Naive thymus-derived CD4-positive, alpha-beta T cell (primary cell): ENCODE measurements at regions of chr12 and their contacts with region 1.

Region 1: GRCh38 chr12:107317751-107318613 is 224.6 kb upstream of the CRY1 start:
- DNase-seq: peak; percentile 67 to 89 (median 85)
- ATAC-seq: peak; percentile 78
- H3K4me3 ChIP-seq: peak overlapping the region; percentile 66
- H3K4me3 Mint-ChIP-seq: peak overlapping the region; percentile 84 to 98 (median 88)
- H3K27ac ChIP-seq: peak overlapping the region; percentile 89
- H3K27ac Mint-ChIP-seq: peak overlapping the region; percentile 34 to 89 (median 62)
- H3K4me1 ChIP-seq: peaks cover 12 to 21% of the 10 kb centered on the region in 2 donors
- H3K4me1 Mint-ChIP-seq: peaks cover 11 to 38% (median 28%) of the 10 kb centered on the region in 7 donors
- H3K27me3 ChIP-seq: no peaks in the 10 kb centered on the region
- H3K27me3 Mint-ChIP-seq: peaks cover 0 to 39% (median 0%) of the 10 kb centered on the region in 5 donors

Region 2: GRCh38 chr12:106357549-106358395 is 960.2 kb before region 1 on chr12 and contains the start of gene POLR3B:
- CTCF ChIA-PET with region 1: no interaction called
- POLR2A ChIA-PET with region 1: no interaction called
- intact Hi-C with region 1: loop called in 1 of 2 experiments (anchors 1 kb)
- DNase-seq: peak; percentile 95 to 99 (median 98)
- ATAC-seq: peak; percentile 98
- H3K4me3 ChIP-seq: peak within 1 kb of the TSS; percentile 96
- H3K4me3 Mint-ChIP-seq: peak within 1 kb of the TSS; percentile 81 to 97 (median 92)
- H3K27ac ChIP-seq: peak within 1 kb of the TSS; percentile 74
- H3K27ac Mint-ChIP-seq: peak within 1 kb of the TSS; percentile 85 to 95 (median 91)
- H3K4me1 ChIP-seq: peaks cover 6 to 12% of the 10 kb centered on the region in 2 donors
- H3K4me1 Mint-ChIP-seq: peaks cover 11 to 22% (median 17%) of the 10 kb centered on the region in 7 donors
- H3K27me3 ChIP-seq: no peaks in the 10 kb centered on the region
- H3K27me3 Mint-ChIP-seq: no peaks in the 10 kb centered on the region
- total RNA-seq, gene POLR3B: 4.7 to 8.7 (median 6.8) TPM

Region 3: GRCh38 chr12:107131832-107132616 is 186.0 kb before region 1 on chr12:
- CTCF ChIA-PET with region 1: interaction called, 3 read pairs
- POLR2A ChIA-PET with region 1: no interaction called
- intact Hi-C with region 1: loop called (anchors 5 kb)
- DNase-seq: peak in 6 of 9 donors; percentile 5 to 56 (median 42)
- ATAC-seq: peak; percentile 59
- H3K4me3 ChIP-seq: no peak overlapping the region
- H3K4me3 Mint-ChIP-seq: no peak overlapping the region
- H3K27ac ChIP-seq: no peak overlapping the region
- H3K27ac Mint-ChIP-seq: peak overlapping the region in 2 of 9 donors; percentile 12 to 46
- H3K4me1 ChIP-seq: no peaks in the 10 kb centered on the region
- H3K4me1 Mint-ChIP-seq: peaks cover 0 to 5% (median 0%) of the 10 kb centered on the region in 7 donors
- H3K27me3 ChIP-seq: no peaks in the 10 kb centered on the region
- H3K27me3 Mint-ChIP-seq: peaks cover 0 to 1% (median 0%) of the 10 kb centered on the region in 5 donors

Region 4: DNA sequence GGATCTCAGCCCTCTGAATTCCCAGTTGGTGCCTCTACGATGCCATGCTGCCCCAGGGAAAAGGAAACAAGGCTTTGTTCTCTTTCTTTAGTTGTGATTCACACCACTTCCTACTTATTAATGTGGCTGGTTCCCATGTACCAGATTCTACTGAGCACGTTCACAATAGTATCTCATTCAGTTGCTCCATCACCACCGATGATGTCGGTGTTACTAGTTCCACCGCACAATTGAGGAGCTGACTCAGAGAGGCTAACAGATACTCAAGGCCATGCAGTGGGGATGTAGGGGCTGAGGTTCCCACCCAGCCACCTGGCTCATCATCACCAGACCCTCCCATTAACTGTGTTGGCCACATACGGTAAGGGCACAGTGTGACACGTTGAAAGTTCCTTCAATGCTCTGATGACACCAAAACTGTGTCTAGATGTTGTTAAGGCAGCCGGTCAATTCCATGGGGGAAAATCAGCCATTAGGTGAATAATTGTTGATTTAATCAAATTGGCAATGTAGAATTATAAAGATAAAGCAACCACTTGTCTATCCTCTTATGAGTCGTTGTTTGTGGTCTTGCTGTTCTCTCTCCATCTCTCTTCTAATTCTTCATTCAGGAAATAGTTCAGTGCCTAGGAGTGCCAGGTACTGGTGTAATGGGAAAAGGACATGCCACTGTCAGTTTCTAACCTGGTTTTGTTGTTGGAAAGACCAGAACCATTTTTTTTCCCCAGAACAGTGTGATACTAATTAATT is 19.5 kb after region 1 on chr12:
- CTCF ChIA-PET with region 1: interaction called, 3 read pairs
- POLR2A ChIA-PET with region 1: interaction called, 12 read pairs
- intact Hi-C with region 1: loop called in 1 of 2 experiments (anchors 2 kb)
- DNase-seq: no peak
- ATAC-seq: peak; percentile 53
- H3K4me3 ChIP-seq: no peak overlapping the region
- H3K4me3 Mint-ChIP-seq: peak overlapping the region in 3 of 10 donors; percentile 10 to 25 (median 17)
- H3K27ac ChIP-seq: no peak overlapping the region
- H3K27ac Mint-ChIP-seq: peak overlapping the region in 5 of 9 donors; percentile 14 to 78 (median 34)
- H3K4me1 ChIP-seq: peaks cover 0 to 21% of the 10 kb centered on the region in 2 donors
- H3K4me1 Mint-ChIP-seq: peaks cover 18 to 74% (median 60%) of the 10 kb centered on the region in 7 donors
- H3K27me3 ChIP-seq: no peaks in the 10 kb centered on the region
- H3K27me3 Mint-ChIP-seq: no peaks in the 10 kb centered on the region

Region 5: GRCh38 chr12:107393043-107393717 is 75.2 kb after region 1 on chr12:
- CTCF ChIA-PET with region 1: interaction called, 3 read pairs
- POLR2A ChIA-PET with region 1: interaction called, 10 read pairs
- intact Hi-C with region 1: no loop called
- DNase-seq: peak in 6 of 9 donors; percentile 32 to 56 (median 49)
- ATAC-seq: peak; percentile 44
- H3K4me3 ChIP-seq: no peak overlapping the region
- H3K4me3 Mint-ChIP-seq: peak overlapping the region; percentile 5 to 67 (median 58)
- H3K27ac ChIP-seq: peak overlapping the region; percentile 5
- H3K27ac Mint-ChIP-seq: peak overlapping the region in 8 of 9 donors; percentile 80 to 94 (median 87)
- H3K4me1 ChIP-seq: peaks cover 0 to 47% of the 10 kb centered on the region in 2 donors
- H3K4me1 Mint-ChIP-seq: peaks cover 39 to 96% (median 91%) of the 10 kb centered on the region in 7 donors
- H3K27me3 ChIP-seq: no peaks in the 10 kb centered on the region
- H3K27me3 Mint-ChIP-seq: no peaks in the 10 kb centered on the region

Region 6: GRCh38 chr12:107607464-107608392 is 289.7 kb after region 1 on chr12:
- CTCF ChIA-PET with region 1: interaction called, 4 read pairs
- POLR2A ChIA-PET with region 1: interaction called, 3 read pairs
- intact Hi-C with region 1: loop called (anchors 1 kb)
- DNase-seq: peak; percentile 55 to 82 (median 71)
- ATAC-seq: peak; percentile 78
- H3K4me3 ChIP-seq: no peak overlapping the region
- H3K4me3 Mint-ChIP-seq: no peak overlapping the region
- H3K27ac ChIP-seq: no peak overlapping the region
- H3K27ac Mint-ChIP-seq: peak overlapping the region in 2 of 9 donors; percentile 9 to 25
- H3K4me1 ChIP-seq: no peaks in the 10 kb centered on the region
- H3K4me1 Mint-ChIP-seq: no peaks in the 10 kb centered on the region
- H3K27me3 ChIP-seq: no peaks in the 10 kb centered on the region
- H3K27me3 Mint-ChIP-seq: no peaks in the 10 kb centered on the region

Region 7: DNA sequence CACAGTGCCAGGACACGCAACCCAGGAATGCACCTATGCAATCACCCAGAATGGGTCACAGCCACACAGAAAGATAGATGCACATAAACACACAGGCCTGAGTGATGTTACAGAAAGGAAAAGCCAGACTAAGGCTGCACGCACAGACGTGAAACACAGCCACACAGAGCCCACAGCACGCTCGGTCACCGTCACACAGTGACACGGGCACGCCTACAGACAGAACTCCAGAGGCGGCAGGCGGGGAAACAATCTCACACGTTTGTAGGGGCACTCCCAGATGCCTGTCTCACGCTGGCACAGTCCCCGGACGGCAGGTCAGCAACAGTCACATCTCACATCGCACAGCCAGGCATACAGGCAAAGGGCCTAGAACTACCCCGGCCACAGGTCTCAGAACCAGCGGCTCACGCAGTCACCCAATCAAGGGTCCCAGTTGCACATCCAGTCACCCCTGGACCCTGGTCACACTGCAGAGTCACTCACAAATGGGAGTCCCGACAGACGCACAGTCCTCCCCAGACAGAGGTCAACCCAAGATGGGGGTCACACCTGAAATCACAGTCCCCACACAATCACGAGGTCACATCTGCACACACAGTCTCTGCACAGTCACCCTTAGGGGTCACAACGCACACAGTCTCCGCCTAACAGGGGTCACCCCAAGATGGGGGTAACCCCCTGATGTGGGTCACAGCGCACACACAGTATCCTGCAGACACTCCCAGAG is 1538.6 kb after region 1 on chr12:
- CTCF ChIA-PET with region 1: no interaction called
- POLR2A ChIA-PET with region 1: no interaction called
- intact Hi-C with region 1: loop called in 1 of 2 experiments (anchors 5 kb)
- DNase-seq: peak; percentile 35 to 77 (median 54)
- ATAC-seq: peak; percentile 68
- H3K4me3 ChIP-seq: peak overlapping the region; percentile 84
- H3K4me3 Mint-ChIP-seq: peak overlapping the region; percentile 89 to 97 (median 94)
- H3K27ac ChIP-seq: peak overlapping the region; percentile 62
- H3K27ac Mint-ChIP-seq: peak overlapping the region; percentile 76 to 99 (median 92)
- H3K4me1 ChIP-seq: peaks cover 18 to 23% of the 10 kb centered on the region in 2 donors
- H3K4me1 Mint-ChIP-seq: peaks cover 26 to 56% (median 47%) of the 10 kb centered on the region in 7 donors
- H3K27me3 ChIP-seq: no peaks in the 10 kb centered on the region
- H3K27me3 Mint-ChIP-seq: peaks cover 0 to 2% (median 0%) of the 10 kb centered on the region in 5 donors